Activated B cell treated with CpG ODN at 0.5 μM for 24 hours (primary cell): ENCODE measurements at regions of chr16 and their contacts with region 1.

Region 1: GRCh38 chr16:62853887-62854286 is 817.6 kb upstream of the CDH8 start:
- DNase-seq: no peak
- ATAC-seq: no peak
- H3K4me3 Mint-ChIP-seq: no peak overlapping the region
- H3K27ac Mint-ChIP-seq: no peak overlapping the region
- H3K4me1 Mint-ChIP-seq: no peaks in the 10 kb centered on the region
- H3K27me3 Mint-ChIP-seq: no peaks in the 10 kb centered on the region
- CTCF ChIP-seq: no peak

Region 2: GRCh38 chr16:62882552-62883221 is 28.8 kb after region 1 on chr16:
- CTCF ChIA-PET with region 1: no interaction called
- POLR2A ChIA-PET with region 1: no interaction called
- intact Hi-C with region 1: no loop called
- DNase-seq: no peak
- ATAC-seq: no peak
- H3K4me3 Mint-ChIP-seq: no peak overlapping the region
- H3K27ac Mint-ChIP-seq: no peak overlapping the region
- H3K4me1 Mint-ChIP-seq: no peaks in the 10 kb centered on the region
- H3K27me3 Mint-ChIP-seq: no peaks in the 10 kb centered on the region
- CTCF ChIP-seq: no peak

Region 3: DNA sequence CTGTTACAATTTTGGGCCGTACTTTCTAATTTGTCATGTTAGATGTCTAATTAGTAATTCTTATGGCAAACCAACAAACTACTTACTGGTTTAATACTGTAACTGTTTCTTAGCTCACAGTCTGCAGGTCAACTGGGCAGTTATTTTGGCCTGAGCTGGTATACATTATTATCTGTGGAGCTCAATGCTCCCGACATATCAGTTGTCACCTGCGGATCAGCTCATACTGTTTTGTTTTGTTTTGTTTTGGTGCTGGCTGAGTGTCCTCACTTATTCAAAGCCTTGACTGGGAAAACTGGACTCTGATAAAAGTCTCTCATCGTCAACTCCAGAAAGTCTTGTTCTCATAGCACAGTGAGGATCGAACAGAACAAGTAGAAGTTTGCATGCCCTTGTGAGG is 243.0 kb after region 1 on chr16:
- CTCF ChIA-PET with region 1: no interaction called
- POLR2A ChIA-PET with region 1: no interaction called
- intact Hi-C with region 1: no loop called
- DNase-seq: no peak
- ATAC-seq: no peak
- H3K4me3 Mint-ChIP-seq: no peak overlapping the region
- H3K27ac Mint-ChIP-seq: no peak overlapping the region
- H3K4me1 Mint-ChIP-seq: no peaks in the 10 kb centered on the region
- H3K27me3 Mint-ChIP-seq: no peaks in the 10 kb centered on the region
- CTCF ChIP-seq: no peak

Region 4: GRCh38 chr16:64416216-64417005 is 1562.5 kb after region 1 on chr16:
- CTCF ChIA-PET with region 1: no interaction called
- POLR2A ChIA-PET with region 1: interaction called, 10 read pairs
- intact Hi-C with region 1: no loop called
- DNase-seq: no peak
- ATAC-seq: no peak
- H3K4me3 Mint-ChIP-seq: no peak overlapping the region
- H3K27ac Mint-ChIP-seq: no peak overlapping the region
- H3K4me1 Mint-ChIP-seq: no peaks in the 10 kb centered on the region
- H3K27me3 Mint-ChIP-seq: no peaks in the 10 kb centered on the region
- CTCF ChIP-seq: no peak